Left cardiac atrium (tissue), 4 donors: ENCODE measurements at regions of chr9 and their contacts with region 1.

Region 1: GRCh38 chr9:134325817-134326723 is at the start of gene RXRA:
- DNase-seq: peak; percentile 87
- ATAC-seq: peak; percentile 72
- total RNA-seq, gene RXRA: 41.6 to 67.7 TPM

Region 2: DNA sequence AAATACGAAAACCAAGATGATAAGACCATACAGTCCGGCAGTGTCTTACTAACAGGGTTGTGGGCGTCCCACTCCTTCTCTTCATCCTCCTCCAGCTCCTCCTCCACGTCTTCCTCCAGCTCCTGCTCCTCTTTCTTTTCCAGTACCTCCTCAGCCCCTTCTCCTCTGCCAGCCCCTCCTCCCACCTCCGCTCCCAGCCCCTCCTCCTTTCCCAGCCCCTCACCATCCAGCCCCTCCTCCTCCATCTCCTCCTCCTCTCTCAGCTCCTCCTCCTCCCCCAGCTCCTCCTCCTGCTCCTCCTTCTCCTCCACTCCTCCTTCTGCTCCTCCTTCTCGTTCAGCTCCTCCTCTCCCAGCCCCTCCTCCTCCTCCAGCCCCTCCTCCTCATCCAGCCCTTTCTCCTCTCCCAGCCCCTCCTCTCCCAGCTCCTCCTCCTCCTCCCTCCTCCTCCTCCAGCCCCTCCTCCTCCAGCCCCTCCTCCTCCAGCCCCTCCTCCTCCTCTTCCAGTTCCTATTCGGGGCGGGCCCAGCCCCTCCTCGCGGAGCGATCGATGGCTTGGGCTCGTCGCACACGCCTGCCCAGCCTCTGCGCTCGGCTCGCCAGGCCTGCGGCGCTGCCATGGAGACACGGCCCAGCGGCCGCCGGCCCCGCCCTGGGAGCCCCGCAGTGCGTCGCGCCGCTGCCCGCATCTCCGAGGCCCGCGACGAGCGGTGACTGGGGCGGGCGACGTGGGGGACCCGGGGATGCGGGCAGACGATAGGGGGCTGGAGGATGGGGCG is 301.1 kb before region 1 on chr9 and contains the start of gene BRD3OS:
- intact Hi-C with region 1: no loop called
- DNase-seq: peak; percentile 98
- ATAC-seq: peak; percentile 97
- total RNA-seq, gene BRD3OS: 7.0 to 7.9 TPM

Region 3: GRCh38 chr9:134171316-134172197 is 154.5 kb before region 1 on chr9:
- intact Hi-C with region 1: loop called in 1 of 2 experiments (anchors 5 kb)
- DNase-seq: no peak
- ATAC-seq: peak in 1 of 2 donors; percentile 31

Region 4: GRCh38 chr9:134185536-134186011 is 140.5 kb before region 1 on chr9:
- intact Hi-C with region 1: loop called in 1 of 2 experiments (anchors 5 kb)
- DNase-seq: peak; percentile 12
- ATAC-seq: no peak

Region 5: DNA sequence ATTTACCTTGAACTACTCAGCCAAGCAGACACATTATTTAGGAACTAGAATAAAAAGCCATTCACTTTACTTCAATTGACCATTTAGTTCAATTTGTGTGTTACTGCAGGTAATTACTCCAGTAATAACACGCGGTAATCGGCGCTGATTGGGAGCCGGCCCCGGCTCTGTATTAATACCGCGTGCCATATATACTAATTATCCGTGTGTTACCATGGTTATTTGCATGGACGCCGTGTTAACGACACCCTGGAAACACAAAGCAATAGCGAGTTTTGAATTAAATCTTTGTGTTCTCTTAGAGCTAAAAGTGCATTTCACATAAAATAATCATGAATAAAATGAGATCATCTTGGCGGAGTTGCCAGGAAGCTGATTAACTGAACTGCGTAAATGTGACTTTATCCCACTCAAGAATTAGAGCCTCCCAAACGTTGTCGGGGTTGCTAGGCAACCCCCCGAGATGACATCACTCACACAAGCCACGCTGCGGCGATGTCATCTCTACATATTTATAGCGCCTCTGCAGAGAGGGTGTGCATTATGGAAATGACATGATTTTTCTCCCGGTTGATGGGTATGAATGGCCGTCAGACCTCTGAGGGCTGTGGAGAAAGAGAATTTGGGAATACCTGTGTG is 120.3 kb before region 1 on chr9:
- intact Hi-C with region 1: loop called in 1 of 2 experiments (anchors 10 kb)
- DNase-seq: peak; percentile 83
- ATAC-seq: peak; percentile 36 to 69

Region 6: GRCh38 chr9:134434894-134435506 is 108.9 kb after region 1 on chr9:
- intact Hi-C with region 1: loop called in 1 of 2 experiments (anchors 5 kb)
- DNase-seq: peak; percentile 97
- ATAC-seq: peak; percentile 81 to 82